ENCODE measurements at regions of chr18 and their contacts with region 1.

Region 1: GRCh38 chr18:5057386-5058348 is 139.4 kb downstream of the AKAIN1 start:
- DNase-seq: peak; percentile 21 to 42
- H3K4me3 ChIP-seq: no peak overlapping the region
- H3K27ac ChIP-seq: no peak overlapping the region
- H3K4me1 ChIP-seq: no peaks in the 10 kb centered on the region
- H3K27me3 ChIP-seq: no peaks in the 10 kb centered on the region
- CTCF ChIP-seq: peak; percentile 34 to 80 (median 54)
- POLR2A ChIP-seq: no peak

Region 2: DNA sequence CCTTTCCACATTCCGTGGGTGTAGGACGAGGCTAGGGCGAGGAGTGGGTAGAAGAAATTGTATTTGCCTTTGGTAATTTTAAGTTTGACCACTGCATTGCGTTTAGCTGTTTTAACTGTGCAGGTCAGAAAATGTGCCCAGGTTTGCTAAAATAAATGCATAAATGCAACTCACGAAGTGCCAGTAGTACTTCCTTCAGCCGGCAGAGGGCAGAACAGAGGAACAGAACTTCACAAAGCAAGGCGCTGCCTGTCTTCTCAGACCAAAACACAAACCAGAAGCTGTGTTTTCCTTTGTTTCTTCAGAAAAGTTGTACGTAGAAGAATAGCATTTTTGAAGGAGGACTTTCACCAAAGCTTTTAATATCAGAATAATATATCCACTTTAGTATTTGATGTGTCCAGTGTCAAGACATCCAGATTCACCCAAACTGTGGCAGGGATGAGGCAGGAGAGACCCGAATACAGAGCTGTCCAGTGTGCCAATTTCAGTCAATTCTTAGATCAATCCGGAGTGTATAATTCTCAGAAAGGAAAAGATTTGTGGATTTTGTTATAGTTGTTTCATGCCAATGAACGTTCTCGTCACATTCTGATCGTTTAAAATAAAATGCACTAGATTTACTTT is 951.1 kb before region 1 on chr18:
- intact Hi-C with region 1: loop called (anchors 5 kb)
- DNase-seq: peak; percentile 63 to 80
- H3K4me3 ChIP-seq: peak overlapping the region in 1 of 3 donors; percentile 27
- H3K27ac ChIP-seq: no peak overlapping the region
- H3K4me1 ChIP-seq: no peaks in the 10 kb centered on the region
- H3K27me3 ChIP-seq: no peaks in the 10 kb centered on the region
- CTCF ChIP-seq: peak; percentile 42 to 92 (median 74)
- POLR2A ChIP-seq: no peak